HEK293T (cell line): ENCODE measurements at regions of chr18 and their contacts with region 1.

Region 1: DNA sequence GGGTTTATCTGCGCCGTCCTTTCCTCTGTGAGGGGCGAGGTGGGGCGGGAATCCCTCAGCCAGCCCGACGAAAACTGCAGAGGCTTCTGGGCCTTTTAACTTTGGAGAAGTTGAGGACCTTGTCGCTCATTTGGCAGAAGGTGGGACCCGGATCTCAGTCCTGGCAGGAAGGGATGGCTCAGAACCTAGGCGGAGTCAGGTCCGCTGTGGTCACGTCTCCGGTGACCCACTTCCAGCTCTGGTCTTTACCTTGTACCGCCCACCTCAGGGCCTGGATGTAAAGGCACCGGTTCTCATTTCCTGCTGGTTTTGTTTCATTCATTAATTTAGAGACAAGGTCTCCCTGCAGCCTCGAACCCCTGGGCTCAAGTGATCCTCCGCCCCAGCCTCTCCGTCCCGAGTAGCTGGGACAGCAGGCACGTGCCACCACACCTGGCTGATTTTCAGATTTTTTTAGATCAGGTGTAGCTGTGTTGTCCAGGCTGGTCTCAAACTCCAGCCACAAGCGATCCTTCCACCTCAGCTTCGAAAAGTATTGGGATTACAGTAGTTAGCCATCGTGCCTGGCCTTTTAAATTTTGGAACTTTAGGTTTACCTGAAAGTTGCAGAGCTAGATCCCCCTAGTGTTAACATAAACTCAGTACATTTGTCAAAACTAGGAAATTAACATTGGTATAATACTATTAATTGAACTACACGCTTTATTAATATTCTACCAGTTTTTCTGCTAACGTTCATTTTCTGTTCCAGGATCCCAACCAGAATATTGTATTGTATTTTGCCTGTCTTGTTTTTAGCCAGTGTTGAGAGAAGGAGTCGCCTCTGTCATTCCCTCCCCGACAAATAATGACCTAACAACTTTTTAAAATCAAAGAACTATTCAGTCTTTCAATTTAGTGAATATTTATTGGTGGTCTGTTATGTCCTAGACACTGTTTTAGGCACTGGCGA is 852 bp downstream of the POLI start:
- DNase-seq: peak; percentile 21

Region 2: GRCh38 chr18:54181856-54182602 is 88.1 kb before region 1 on chr18:
- CTCF ChIA-PET with region 1: no interaction called
- POLR2A ChIA-PET with region 1: no interaction called
- DNase-seq: no peak

Region 3: GRCh38 chr18:54224379-54225014 is 45.7 kb before region 1 on chr18 and contains the start of gene MBD2:
- CTCF ChIA-PET with region 1: interaction called, 3 read pairs
- POLR2A ChIA-PET with region 1: interaction called, 12 read pairs
- DNase-seq: peak; percentile 84

Region 4: DNA sequence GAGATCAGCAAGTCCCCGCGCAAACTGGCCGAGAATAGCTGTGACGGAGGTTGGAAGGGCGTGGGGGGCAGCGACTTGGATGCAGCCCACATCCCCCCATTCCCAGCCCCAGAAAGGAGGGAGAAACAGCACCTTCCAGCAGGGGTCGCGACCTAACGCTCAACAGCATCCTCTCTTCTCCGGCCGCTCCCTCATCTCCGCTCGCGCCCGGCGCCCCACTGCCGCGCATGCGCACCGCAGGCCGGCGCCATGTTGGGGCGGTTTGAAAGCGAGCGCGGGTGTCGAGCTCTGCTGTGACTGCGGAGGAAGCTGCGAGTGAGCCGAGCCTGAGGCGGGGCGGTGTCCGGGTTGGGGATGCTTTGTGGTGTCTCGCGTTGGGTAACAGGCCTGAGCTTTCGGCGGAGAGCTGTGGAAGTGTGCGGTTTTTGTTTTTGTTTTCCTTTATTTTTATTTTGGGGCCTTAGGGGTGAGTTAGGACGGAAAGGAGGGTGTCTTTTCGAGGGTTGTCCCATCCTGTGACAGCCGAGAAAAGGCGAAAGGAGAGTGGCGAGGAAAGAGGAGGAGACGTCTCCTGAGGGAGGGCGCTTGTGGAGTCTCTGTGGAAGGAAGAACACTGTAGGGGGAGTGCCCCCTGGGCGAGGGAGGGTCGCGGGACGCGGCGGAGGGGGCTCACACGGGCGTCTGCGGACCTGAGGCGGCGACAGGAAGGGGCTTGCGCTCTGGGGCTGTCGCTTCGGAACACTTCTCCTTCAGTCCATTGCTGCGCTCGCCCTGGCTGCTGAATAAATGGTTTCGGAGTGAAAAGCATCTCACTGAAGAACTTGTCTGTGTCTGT is 87.7 kb after region 1 on chr18 and contains the starts of genes C18orf54 and STARD6:
- CTCF ChIA-PET with region 1: no interaction called
- POLR2A ChIA-PET with region 1: interaction called, 11 read pairs
- DNase-seq: peak; percentile 84